Naive thymus-derived CD4-positive, alpha-beta T cell (primary cell): ENCODE measurements at regions of chr10 and their contacts with region 1.

Region 1: GRCh38 chr10:123241391-123242141 is 87.4 kb downstream of the BUB3 start:
- DNase-seq: peak; percentile 18 to 92 (median 87)
- ATAC-seq: peak; percentile 95
- H3K4me3 ChIP-seq: peak overlapping the region; percentile 29
- H3K4me3 Mint-ChIP-seq: peak overlapping the region; percentile 46 to 87 (median 74)
- H3K27ac ChIP-seq: peak overlapping the region; percentile 85
- H3K27ac Mint-ChIP-seq: peak overlapping the region; percentile 92 to 100 (median 98)
- H3K4me1 ChIP-seq: peaks cover 24 to 25% of the 10 kb centered on the region in 2 donors
- H3K4me1 Mint-ChIP-seq: peaks cover 10 to 43% (median 42%) of the 10 kb centered on the region in 7 donors
- H3K27me3 ChIP-seq: no peaks in the 10 kb centered on the region
- H3K27me3 Mint-ChIP-seq: no peaks in the 10 kb centered on the region

Region 2: GRCh38 chr10:122879339-122880273 is 362.0 kb before region 1 on chr10 and contains the start of gene FAM24B:
- CTCF ChIA-PET with region 1: no interaction called
- POLR2A ChIA-PET with region 1: no interaction called
- intact Hi-C with region 1: loop called in 1 of 2 experiments (anchors 1 kb)
- DNase-seq: peak; percentile 84 to 96 (median 94)
- ATAC-seq: peak; percentile 93
- H3K4me3 ChIP-seq: peak within 1 kb of the TSS; percentile 81
- H3K4me3 Mint-ChIP-seq: peak within 1 kb of the TSS; percentile 86 to 99 (median 92)
- H3K27ac ChIP-seq: peak within 1 kb of the TSS; percentile 77
- H3K27ac Mint-ChIP-seq: peak within 1 kb of the TSS; percentile 85 to 96 (median 92)
- H3K4me1 ChIP-seq: peaks cover 18 to 21% of the 10 kb centered on the region in 2 donors
- H3K4me1 Mint-ChIP-seq: peaks cover 31 to 65% (median 54%) of the 10 kb centered on the region in 7 donors
- H3K27me3 ChIP-seq: no peaks in the 10 kb centered on the region
- H3K27me3 Mint-ChIP-seq: no peaks in the 10 kb centered on the region
- total RNA-seq, gene FAM24B: 9.9 to 13.5 (median 11.4) TPM

Region 3: GRCh38 chr10:123147635-123148413 is 93.7 kb before region 1 on chr10 and contains the start of gene HMX2:
- CTCF ChIA-PET with region 1: no interaction called
- POLR2A ChIA-PET with region 1: interaction called, 13 read pairs
- intact Hi-C with region 1: loop called in 1 of 2 experiments (anchors 5 kb)
- DNase-seq: peak in 2 of 9 donors; percentile 37 to 40
- ATAC-seq: peak; percentile 30
- H3K4me3 ChIP-seq: peak within 1 kb of the TSS; percentile 52
- H3K4me3 Mint-ChIP-seq: peak within 1 kb of the TSS; percentile 62 to 91 (median 89)
- H3K27ac ChIP-seq: no peak within 1 kb of the TSS
- H3K27ac Mint-ChIP-seq: peak within 1 kb of the TSS in 5 of 9 donors; percentile 15 to 66 (median 43)
- H3K4me1 ChIP-seq: peaks cover 33 to 79% of the 10 kb centered on the region in 2 donors
- H3K4me1 Mint-ChIP-seq: peaks cover 25 to 77% (median 62%) of the 10 kb centered on the region in 7 donors
- H3K27me3 ChIP-seq: peaks cover 25 to 48% of the 10 kb centered on the region in 2 donors
- H3K27me3 Mint-ChIP-seq: peaks cover 50 to 82% (median 54%) of the 10 kb centered on the region in 5 donors
- total RNA-seq, gene HMX2: not detected

Region 4: GRCh38 chr10:123160311-123160980 is 81.1 kb before region 1 on chr10:
- CTCF ChIA-PET with region 1: no interaction called
- POLR2A ChIA-PET with region 1: interaction called, 12 read pairs
- intact Hi-C with region 1: loop called in 1 of 2 experiments (anchors 1 kb)
- DNase-seq: peak in 7 of 9 donors; percentile 49 to 80 (median 73)
- ATAC-seq: peak; percentile 93
- H3K4me3 ChIP-seq: peak overlapping the region; percentile 25
- H3K4me3 Mint-ChIP-seq: peak overlapping the region; percentile 59 to 93 (median 71)
- H3K27ac ChIP-seq: peak overlapping the region; percentile 46
- H3K27ac Mint-ChIP-seq: peak overlapping the region; percentile 73 to 90 (median 78)
- H3K4me1 ChIP-seq: peaks cover 40 to 58% of the 10 kb centered on the region in 2 donors
- H3K4me1 Mint-ChIP-seq: peaks cover 33 to 87% (median 78%) of the 10 kb centered on the region in 7 donors
- H3K27me3 ChIP-seq: no peaks in the 10 kb centered on the region
- H3K27me3 Mint-ChIP-seq: no peaks in the 10 kb centered on the region

Region 5: DNA sequence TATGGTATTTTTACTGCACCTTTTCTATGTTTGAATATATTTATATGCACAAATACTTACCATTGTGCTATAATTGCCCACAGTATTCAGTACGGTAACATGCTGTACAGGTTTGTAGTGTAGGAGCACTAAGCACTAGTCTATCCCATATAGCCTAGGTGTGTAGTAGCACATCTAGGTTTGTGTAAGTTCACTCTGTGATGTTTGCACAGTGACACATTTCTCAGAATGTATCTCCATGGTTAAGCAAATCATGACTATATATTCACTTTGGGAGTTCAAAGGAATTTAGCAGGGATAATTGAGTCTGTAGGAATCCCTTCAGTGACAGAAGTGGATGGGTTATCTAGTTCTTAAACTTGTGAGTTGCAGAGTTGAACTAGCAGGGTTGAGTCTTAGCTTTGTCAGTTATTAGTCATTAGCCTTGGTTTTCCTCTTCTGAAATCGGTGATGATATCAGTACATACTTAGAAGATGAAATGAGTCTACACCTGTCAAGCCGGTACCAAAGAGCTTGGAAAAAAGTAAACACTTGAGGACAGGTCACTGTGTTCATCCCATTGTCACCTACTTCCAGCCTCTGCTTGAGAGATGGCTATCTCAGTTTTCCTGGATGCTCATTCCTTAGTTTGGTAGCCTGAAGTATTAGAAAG is 14.0 kb before region 1 on chr10:
- CTCF ChIA-PET with region 1: interaction called, 3 read pairs
- POLR2A ChIA-PET with region 1: interaction called, 10 read pairs
- intact Hi-C with region 1: no loop called
- DNase-seq: no peak
- ATAC-seq: no peak
- H3K4me3 ChIP-seq: no peak overlapping the region
- H3K4me3 Mint-ChIP-seq: no peak overlapping the region
- H3K27ac ChIP-seq: no peak overlapping the region
- H3K27ac Mint-ChIP-seq: no peak overlapping the region
- H3K4me1 ChIP-seq: no peaks in the 10 kb centered on the region
- H3K4me1 Mint-ChIP-seq: no peaks in the 10 kb centered on the region
- H3K27me3 ChIP-seq: no peaks in the 10 kb centered on the region
- H3K27me3 Mint-ChIP-seq: no peaks in the 10 kb centered on the region